Esophagus muscularis mucosa (tissue), 4 donors: ENCODE measurements at regions of chr12 and their contacts with region 1.

Region 1: GRCh38 chr12:1787714-1788113 is 32.7 kb upstream of the LRTM2 start:
- DNase-seq: no peak
- H3K4me3 ChIP-seq: no peak overlapping the region
- H3K27ac ChIP-seq: no peak overlapping the region
- H3K4me1 ChIP-seq: peaks cover 0 to 21% (median 11%) of the 10 kb centered on the region in 4 donors
- H3K27me3 ChIP-seq: no peaks in the 10 kb centered on the region
- CTCF ChIP-seq: no peak
- EP300 ChIP-seq: no peak
- POLR2A ChIP-seq: no peak

Region 2: GRCh38 chr12:1698638-1699214 is 89.0 kb before region 1 on chr12:
- intact Hi-C with region 1: loop called (anchors 5 kb)
- DNase-seq: no peak
- H3K4me3 ChIP-seq: no peak overlapping the region
- H3K27ac ChIP-seq: no peak overlapping the region
- H3K4me1 ChIP-seq: peaks cover 12 to 63% (median 57%) of the 10 kb centered on the region in 4 donors
- H3K27me3 ChIP-seq: no peaks in the 10 kb centered on the region
- CTCF ChIP-seq: no peak
- EP300 ChIP-seq: no peak
- POLR2A ChIP-seq: no peak